CD4-positive, alpha-beta memory T cell (primary cell): ENCODE measurements at regions of chr3 and their contacts with region 1.

Region 1: GRCh38 chr3:184513276-184514170 is 48.1 kb upstream of the EPHB3 start:
- DNase-seq: peak; percentile 72 to 78 (median 74)
- H3K4me3 ChIP-seq: peak overlapping the region in 1 of 2 donors; percentile 51
- H3K4me3 Mint-ChIP-seq: peak overlapping the region; percentile 41 to 77 (median 68)
- H3K27ac ChIP-seq: no peak overlapping the region
- H3K27ac Mint-ChIP-seq: no peak overlapping the region
- H3K4me1 ChIP-seq: peaks cover 11% of the 10 kb centered on the region
- H3K4me1 Mint-ChIP-seq: peaks cover 4 to 16% (median 8%) of the 10 kb centered on the region in 4 donors
- H3K27me3 ChIP-seq: peaks cover 26% of the 10 kb centered on the region
- H3K27me3 Mint-ChIP-seq: peaks cover 39 to 51% of the 10 kb centered on the region in 2 donors

Region 2: GRCh38 chr3:183895296-183895695 is 618.2 kb before region 1 on chr3:
- CTCF ChIA-PET with region 1: interaction called, 26 read pairs
- POLR2A ChIA-PET with region 1: no interaction called
- intact Hi-C with region 1: loop called (anchors 10 kb)
- DNase-seq: peak; percentile 48 to 60 (median 57)
- H3K4me3 ChIP-seq: no peak overlapping the region
- H3K4me3 Mint-ChIP-seq: no peak overlapping the region
- H3K27ac ChIP-seq: no peak overlapping the region
- H3K27ac Mint-ChIP-seq: no peak overlapping the region
- H3K4me1 ChIP-seq: no peaks in the 10 kb centered on the region
- H3K4me1 Mint-ChIP-seq: peaks cover 0 to 3% (median 1%) of the 10 kb centered on the region in 4 donors
- H3K27me3 ChIP-seq: no peaks in the 10 kb centered on the region
- H3K27me3 Mint-ChIP-seq: peaks cover 17 to 37% of the 10 kb centered on the region in 2 donors

Region 3: GRCh38 chr3:184371570-184372018 is 141.9 kb before region 1 on chr3:
- CTCF ChIA-PET with region 1: interaction called, 93 read pairs
- POLR2A ChIA-PET with region 1: interaction called, 3 read pairs
- intact Hi-C with region 1: loop called (anchors 2 kb)
- DNase-seq: peak; percentile 47 to 62 (median 58)
- H3K4me3 ChIP-seq: no peak overlapping the region
- H3K4me3 Mint-ChIP-seq: no peak overlapping the region
- H3K27ac ChIP-seq: no peak overlapping the region
- H3K27ac Mint-ChIP-seq: no peak overlapping the region
- H3K4me1 ChIP-seq: no peaks in the 10 kb centered on the region
- H3K4me1 Mint-ChIP-seq: peaks cover 6 to 18% (median 10%) of the 10 kb centered on the region in 4 donors
- H3K27me3 ChIP-seq: no peaks in the 10 kb centered on the region
- H3K27me3 Mint-ChIP-seq: peaks cover 9 to 11% of the 10 kb centered on the region in 2 donors

Region 4: DNA sequence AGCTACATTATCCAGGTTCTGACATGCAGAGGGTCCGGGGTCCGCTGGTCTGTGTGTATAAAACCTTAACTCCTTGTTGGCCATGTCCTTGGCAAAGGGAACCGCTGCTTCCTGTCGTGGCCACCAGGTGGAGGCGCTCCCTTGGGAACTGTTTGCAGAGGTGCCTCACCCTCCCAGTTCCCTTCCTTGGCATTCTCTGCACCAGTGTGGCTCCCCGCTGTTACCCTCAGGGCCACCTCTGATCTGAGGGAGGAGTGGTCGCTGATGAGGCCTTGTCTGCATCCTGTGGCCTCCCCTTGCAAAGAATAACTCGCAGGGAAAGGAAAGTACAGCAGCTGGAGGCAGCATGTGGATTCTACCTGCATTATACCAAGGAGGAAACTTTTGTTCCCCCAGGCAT is 44.1 kb before region 1 on chr3:
- CTCF ChIA-PET with region 1: interaction called, 12 read pairs
- POLR2A ChIA-PET with region 1: no interaction called
- intact Hi-C with region 1: no loop called
- DNase-seq: no peak
- H3K4me3 ChIP-seq: no peak overlapping the region
- H3K4me3 Mint-ChIP-seq: no peak overlapping the region
- H3K27ac ChIP-seq: no peak overlapping the region
- H3K27ac Mint-ChIP-seq: no peak overlapping the region
- H3K4me1 ChIP-seq: no peaks in the 10 kb centered on the region
- H3K4me1 Mint-ChIP-seq: peaks cover 2 to 8% (median 4%) of the 10 kb centered on the region in 4 donors
- H3K27me3 ChIP-seq: no peaks in the 10 kb centered on the region
- H3K27me3 Mint-ChIP-seq: peaks cover 10 to 25% of the 10 kb centered on the region in 2 donors

Region 5: DNA sequence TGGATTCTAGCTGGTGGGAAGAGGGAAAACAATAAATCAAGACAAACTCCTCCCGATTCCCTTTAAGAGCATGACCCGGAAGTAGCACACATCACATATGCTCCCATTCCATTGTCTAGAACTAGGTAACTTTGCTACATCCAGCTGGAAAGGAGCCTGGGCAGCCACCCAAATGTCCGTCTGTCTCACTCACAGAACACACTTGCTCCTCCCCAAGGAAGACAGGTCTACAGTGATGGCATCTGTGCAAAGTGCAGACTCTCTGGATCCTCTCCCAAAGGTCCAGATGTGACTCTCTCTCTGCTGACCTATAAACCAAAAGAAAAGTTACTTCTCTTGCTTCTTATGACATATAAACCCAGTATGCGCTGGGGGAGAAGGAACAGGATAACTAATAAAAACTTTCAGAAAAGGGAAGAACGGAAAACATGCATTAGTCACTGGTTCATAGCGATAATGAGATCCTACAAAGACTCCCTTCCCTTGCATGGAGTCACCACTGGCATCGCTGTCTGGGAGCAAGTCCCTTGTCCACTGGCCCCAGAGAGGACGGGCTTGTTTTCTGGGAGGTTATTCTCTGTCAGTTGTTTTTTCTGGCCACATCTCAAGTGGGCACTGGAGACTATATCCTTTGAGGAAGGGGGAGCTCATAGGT is 18.2 kb after region 1 on chr3:
- CTCF ChIA-PET with region 1: interaction called, 68 read pairs
- POLR2A ChIA-PET with region 1: interaction called, 3 read pairs
- intact Hi-C with region 1: no loop called
- DNase-seq: no peak
- H3K4me3 ChIP-seq: no peak overlapping the region
- H3K4me3 Mint-ChIP-seq: no peak overlapping the region
- H3K27ac ChIP-seq: no peak overlapping the region
- H3K27ac Mint-ChIP-seq: no peak overlapping the region
- H3K4me1 ChIP-seq: no peaks in the 10 kb centered on the region
- H3K4me1 Mint-ChIP-seq: no peaks in the 10 kb centered on the region
- H3K27me3 ChIP-seq: no peaks in the 10 kb centered on the region
- H3K27me3 Mint-ChIP-seq: peaks cover 14 to 20% of the 10 kb centered on the region in 2 donors